ENCODE measurements at regions of chr12 and their contacts with region 1.

Region 1: DNA sequence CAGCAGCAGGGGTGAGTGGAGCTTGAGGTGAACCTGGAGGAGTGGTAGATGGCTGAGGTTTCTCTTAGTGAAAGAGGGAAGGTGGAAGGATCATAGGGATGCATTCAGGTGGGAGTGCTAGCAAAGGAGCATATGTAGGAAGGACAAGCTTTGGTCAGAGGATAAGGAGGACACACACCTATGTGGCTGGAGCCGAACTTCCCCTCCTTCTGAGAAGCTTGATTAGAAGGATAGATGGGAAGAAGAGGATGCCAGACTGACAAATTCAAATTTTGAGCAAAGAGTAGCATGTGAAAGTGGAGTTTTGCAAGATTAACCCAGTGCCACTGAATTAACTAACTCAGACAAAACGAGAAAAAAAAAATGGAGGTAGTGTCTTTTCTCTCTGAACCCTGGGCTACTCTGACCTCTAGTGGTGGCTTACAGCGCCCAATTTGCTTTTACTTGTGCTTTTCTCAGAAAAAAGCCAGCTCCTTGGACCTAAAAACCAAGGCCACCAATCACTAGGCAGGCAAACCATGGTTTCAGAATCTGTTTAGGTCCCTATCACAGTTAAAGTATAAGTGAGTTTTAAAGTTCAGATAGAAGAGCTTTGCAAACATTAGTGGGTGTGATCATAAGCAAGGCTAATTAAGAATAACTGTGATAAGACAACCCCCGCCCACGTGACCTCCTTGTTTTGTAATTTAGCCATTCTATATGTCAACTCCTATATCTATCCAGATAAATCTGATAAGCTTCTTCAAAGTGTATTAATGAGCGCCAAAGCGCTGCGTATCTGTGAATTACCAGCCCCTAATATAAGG is 15.5 kb downstream of the EMP1 start:
- DNase-seq: no peak
- ATAC-seq: peak; percentile 73
- H3K4me3 ChIP-seq: no peak overlapping the region
- H3K27ac ChIP-seq: peak overlapping the region; percentile 31
- H3K4me1 ChIP-seq: peaks cover 50% of the 10 kb centered on the region
- H3K27me3 ChIP-seq: no peaks in the 10 kb centered on the region
- CTCF ChIP-seq: peak; percentile 83

Region 2: GRCh38 chr12:13094347-13094746 is 117.7 kb before region 1 on chr12:
- intact Hi-C with region 1: loop called (anchors 10 kb)
- DNase-seq: no peak
- ATAC-seq: no peak
- H3K4me3 ChIP-seq: no peak overlapping the region
- H3K27ac ChIP-seq: no peak overlapping the region
- H3K4me1 ChIP-seq: peaks cover 38% of the 10 kb centered on the region
- H3K27me3 ChIP-seq: no peaks in the 10 kb centered on the region
- CTCF ChIP-seq: no peak

Measured in upper lobe of right lung (tissue), 1 donor.